Cardiac septum (tissue), 1 donor: ENCODE measurements at regions of chr19 and their contacts with region 1.

Region 1: GRCh38 chr19:36837906-36838783 is at the start of gene ZNF790:
- DNase-seq: peak; percentile 92
- total RNA-seq, gene ZNF790: 7.8 TPM

Region 2: GRCh38 chr19:36573020-36573885 is 264.9 kb before region 1 on chr19 and contains the start of gene ZNF529:
- intact Hi-C with region 1: loop called (anchors 5 kb)
- DNase-seq: peak; percentile 94
- total RNA-seq, gene ZNF529: 17.3 TPM

Region 3: GRCh38 chr19:36627057-36627456 is 211.1 kb before region 1 on chr19:
- intact Hi-C with region 1: no loop called
- DNase-seq: no peak

Region 4: DNA sequence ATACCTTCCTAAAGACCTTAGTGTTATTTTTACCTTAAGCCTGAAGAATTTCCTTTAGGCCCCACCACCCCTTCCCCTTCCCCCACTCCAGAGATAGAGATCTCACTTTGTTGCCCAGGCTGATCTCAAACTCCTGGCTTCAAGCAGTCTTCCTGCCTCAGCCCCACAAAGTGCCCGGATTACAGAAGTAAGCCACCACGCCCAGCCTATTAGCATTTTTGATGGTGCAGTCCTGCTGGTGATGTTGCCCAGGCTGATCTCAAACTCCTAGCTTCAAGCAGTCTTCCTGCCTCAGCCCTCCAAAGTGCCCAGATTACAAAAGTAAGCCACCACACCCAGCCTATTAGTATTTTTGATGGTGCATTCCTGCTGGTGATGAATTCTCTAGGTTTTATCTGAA is 128.7 kb before region 1 on chr19:
- intact Hi-C with region 1: no loop called
- DNase-seq: no peak

Region 5: DNA sequence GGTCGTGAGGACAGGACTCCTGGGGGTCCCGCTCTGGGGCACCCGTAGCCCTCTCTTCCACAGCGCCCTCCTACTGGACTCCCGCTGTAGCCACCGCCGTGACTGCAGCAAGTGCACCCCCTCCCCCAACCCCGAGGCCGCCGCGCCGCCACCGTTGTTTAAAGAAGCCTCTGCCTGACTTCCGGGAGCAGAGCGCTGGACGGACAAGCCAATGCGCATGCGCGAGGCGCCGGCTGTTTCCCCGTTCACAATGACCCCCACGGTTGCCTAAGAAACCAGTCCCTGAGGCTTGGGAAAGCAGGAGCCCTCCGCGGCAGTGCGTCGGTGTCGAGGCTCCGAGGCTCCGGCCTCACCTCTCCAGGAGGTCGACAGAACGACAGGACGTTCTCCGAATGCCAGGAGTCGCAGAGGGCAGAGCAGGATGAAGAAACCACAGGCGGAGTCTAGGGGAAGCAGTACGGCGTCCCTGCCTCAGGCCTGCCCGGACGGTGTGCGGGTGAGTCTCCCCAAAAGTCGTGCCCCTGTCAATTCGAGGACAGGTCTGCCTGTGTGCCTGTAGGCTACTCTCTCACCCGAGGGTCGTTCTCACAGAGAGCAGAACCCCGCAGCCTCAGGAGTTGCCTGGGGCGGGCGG is 169.6 kb after region 1 on chr19:
- intact Hi-C with region 1: no loop called
- DNase-seq: peak; percentile 86